HCT116 (cell line): ENCODE measurements at regions of chr19 and their contacts with region 1.

Region 1: DNA sequence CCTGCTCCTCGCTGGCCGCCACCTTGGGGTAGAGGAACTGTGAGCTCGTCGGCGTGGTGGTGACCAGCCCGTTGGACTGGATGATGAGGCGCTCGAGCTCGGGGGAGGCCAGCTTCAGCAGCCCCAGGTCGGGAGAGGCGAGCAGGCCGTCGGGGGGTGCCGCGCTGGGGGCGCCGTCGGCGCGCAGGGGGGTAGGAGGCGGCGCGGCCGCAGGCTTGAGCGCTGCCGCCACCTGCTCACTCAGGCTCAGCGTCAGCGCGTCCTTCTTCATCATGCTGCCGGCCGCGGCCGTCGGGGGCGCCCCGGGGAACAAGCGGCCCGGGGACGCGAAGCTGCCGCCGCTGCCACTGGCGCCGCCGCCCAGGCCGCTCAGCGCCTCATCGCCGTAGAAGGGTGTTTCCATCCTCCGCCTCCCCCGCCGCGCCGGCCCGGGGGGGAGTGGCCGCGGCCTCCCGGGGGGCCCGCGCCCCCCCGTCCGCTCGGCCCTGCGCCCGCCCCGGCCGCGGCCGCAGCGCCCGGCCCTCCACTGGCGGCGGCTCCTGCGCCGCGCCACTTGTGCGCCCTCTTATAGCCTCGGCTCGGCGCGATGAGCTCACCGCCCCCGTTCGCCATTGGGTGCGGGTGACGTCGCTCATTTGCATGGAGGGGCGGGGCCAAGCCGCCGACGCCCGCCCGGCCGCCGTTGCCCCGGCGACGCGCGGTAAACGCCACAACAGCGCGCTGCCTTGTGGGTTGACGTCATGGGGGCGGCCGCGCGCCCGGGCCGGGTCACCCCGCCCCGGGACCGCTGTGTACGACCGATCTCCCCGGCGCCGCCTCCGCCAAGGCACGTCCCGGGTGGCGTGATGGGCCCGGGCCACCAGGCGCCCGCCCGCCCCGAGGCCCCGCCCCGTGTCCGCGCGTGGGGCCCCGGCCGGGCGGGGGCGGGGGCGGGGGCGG is at the start of gene JUND:
- DNase-seq: peak; percentile 93
- ATAC-seq: peak; percentile 76
- H3K4me3 ChIP-seq: peak within 1 kb of the TSS; percentile 76 to 89
- H3K27ac ChIP-seq: peak within 1 kb of the TSS; percentile 100
- H3K4me1 ChIP-seq: peaks cover 43 to 56% of the 10 kb centered on the region in 2 experiments
- H3K27me3 ChIP-seq: no peaks in the 10 kb centered on the region
- CTCF ChIP-seq: no peak
- POLR2A ChIP-seq: peak; percentile 98
- RAD21 ChIP-seq: no peak
- total RNA-seq, gene JUND: 221 TPM

Region 2: DNA sequence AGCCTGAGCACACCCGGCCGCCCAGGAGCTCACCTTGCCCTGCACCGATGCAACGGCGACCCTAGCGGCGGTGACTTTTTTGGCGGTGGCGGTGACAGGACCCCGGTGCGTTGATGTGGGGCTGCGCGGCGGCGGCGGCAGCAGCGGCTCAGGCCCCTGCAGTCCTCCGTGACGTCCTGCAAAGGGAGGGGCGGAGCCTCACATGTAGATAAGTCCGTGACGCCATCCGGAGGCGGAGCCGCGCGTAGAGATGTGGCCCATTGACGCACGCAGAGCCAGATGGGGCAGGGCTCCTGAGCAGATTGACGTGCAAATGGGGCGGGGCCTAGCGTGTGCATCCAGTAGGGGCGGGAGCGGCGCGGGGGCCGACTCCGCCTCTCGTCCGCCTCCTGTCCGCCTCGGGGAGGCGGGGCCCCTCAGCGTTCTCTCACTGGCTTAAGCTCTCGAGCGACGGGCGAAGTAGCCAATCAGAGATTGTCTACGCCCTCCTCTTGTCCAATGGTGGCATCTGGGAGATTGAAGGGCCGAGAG is 77.4 kb before region 1 on chr19 and contains the start of gene RAB3A:
- CTCF ChIA-PET with region 1: interaction called, 9 read pairs
- POLR2A ChIA-PET with region 1: interaction called, 23 read pairs
- RAD21 ChIA-PET with region 1: interaction called in 1 of 2 experiments, 3 read pairs
- intact Hi-C with region 1: no loop called
- DNase-seq: peak; percentile 100
- ATAC-seq: peak; percentile 90
- H3K4me3 ChIP-seq: peak within 1 kb of the TSS; percentile 87 to 92
- H3K27ac ChIP-seq: peak within 1 kb of the TSS; percentile 90
- H3K4me1 ChIP-seq: peaks cover 13 to 32% of the 10 kb centered on the region in 2 experiments
- H3K27me3 ChIP-seq: no peaks in the 10 kb centered on the region
- CTCF ChIP-seq: no peak
- POLR2A ChIP-seq: no peak
- RAD21 ChIP-seq: no peak
- total RNA-seq, gene RAB3A: 10.6 TPM

Region 3: DNA sequence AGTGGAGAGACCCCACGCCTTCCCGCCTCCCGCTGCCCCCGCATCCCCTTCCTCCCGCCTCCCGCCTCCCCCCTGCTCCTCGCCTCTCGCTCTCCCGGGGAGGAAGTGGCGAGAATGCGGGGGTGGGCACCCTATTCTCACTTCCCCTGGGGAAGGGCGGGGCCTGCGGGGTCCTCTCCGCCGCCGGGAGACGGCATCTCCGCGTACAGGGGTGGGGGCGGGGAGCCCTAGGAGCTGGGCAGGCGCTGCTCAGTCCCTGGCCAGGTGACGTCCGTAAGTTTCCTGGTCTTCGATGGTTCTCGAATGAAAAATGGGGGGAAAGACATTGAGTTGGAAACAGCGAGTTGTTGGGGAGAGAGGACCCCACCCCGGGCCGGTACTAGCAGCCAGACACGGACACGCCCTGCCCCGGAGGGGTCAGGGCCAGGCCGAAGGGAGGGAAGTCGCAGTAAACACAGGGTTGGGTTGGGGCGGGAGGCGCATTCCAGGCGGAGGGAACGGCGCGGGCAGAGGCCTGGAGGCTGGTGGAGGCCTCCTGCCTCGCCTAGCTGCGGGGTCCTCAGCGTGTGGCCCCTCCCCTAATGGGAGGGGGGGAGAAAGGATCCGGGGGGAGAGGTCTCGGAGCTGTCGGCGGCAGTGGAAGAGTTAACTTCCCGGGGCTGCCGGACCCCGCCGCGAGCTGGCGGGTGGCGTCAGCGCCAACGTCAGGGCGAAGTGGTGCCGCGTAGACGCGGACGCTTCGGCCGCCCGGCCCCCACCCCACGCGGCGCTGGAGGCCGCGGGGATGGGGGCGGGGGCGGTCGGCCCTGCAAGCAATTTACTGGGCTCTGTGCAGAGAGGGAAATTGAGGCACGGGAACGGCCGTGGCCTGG is 10.5 kb after region 1 on chr19:
- CTCF ChIA-PET with region 1: interaction called, 28 read pairs
- POLR2A ChIA-PET with region 1: interaction called, 138 read pairs
- RAD21 ChIA-PET with region 1: interaction called, 5 to 6 read pairs
- intact Hi-C with region 1: no loop called
- DNase-seq: no peak
- ATAC-seq: peak; percentile 65
- H3K4me3 ChIP-seq: peak overlapping the region; percentile 49 to 74
- H3K27ac ChIP-seq: peak overlapping the region; percentile 94
- H3K4me1 ChIP-seq: peaks cover 28 to 55% of the 10 kb centered on the region in 2 experiments
- H3K27me3 ChIP-seq: no peaks in the 10 kb centered on the region
- CTCF ChIP-seq: no peak
- POLR2A ChIP-seq: peak; percentile 2
- RAD21 ChIP-seq: no peak

Region 4: GRCh38 chr19:18322759-18323460 is 41.6 kb after region 1 on chr19 and contains the start of gene LSM4:
- CTCF ChIA-PET with region 1: interaction called, 76 read pairs
- POLR2A ChIA-PET with region 1: interaction called, 52 read pairs
- RAD21 ChIA-PET with region 1: interaction called, 5 to 8 read pairs
- intact Hi-C with region 1: loop called (anchors 1 kb)
- DNase-seq: peak; percentile 98
- ATAC-seq: peak; percentile 93
- H3K4me3 ChIP-seq: peak within 1 kb of the TSS; percentile 78 to 97
- H3K27ac ChIP-seq: peak within 1 kb of the TSS; percentile 93
- H3K4me1 ChIP-seq: peaks cover 49 to 53% of the 10 kb centered on the region in 2 experiments
- H3K27me3 ChIP-seq: no peaks in the 10 kb centered on the region
- CTCF ChIP-seq: peak; percentile 29 to 51 (median 42)
- POLR2A ChIP-seq: peak; percentile 68
- RAD21 ChIP-seq: peak; percentile 69
- total RNA-seq, gene LSM4: 400 TPM

Region 5: GRCh38 chr19:18364826-18365528 is 83.6 kb after region 1 on chr19:
- CTCF ChIA-PET with region 1: interaction called, 3 read pairs
- POLR2A ChIA-PET with region 1: interaction called, 11 read pairs
- RAD21 ChIA-PET with region 1: no interaction called
- intact Hi-C with region 1: no loop called
- DNase-seq: peak; percentile 96
- ATAC-seq: peak; percentile 71
- H3K4me3 ChIP-seq: peak overlapping the region in 1 of 2 experiments; percentile 22; a peak in 2 of 4 replicates
- H3K27ac ChIP-seq: peak overlapping the region; percentile 99
- H3K4me1 ChIP-seq: peaks cover 51 to 66% of the 10 kb centered on the region in 2 experiments
- H3K27me3 ChIP-seq: no peaks in the 10 kb centered on the region
- CTCF ChIP-seq: no peak
- POLR2A ChIP-seq: no peak
- RAD21 ChIP-seq: no peak

Region 6: GRCh38 chr19:18408053-18408476 is 126.7 kb after region 1 on chr19:
- CTCF ChIA-PET with region 1: interaction called, 3 read pairs
- POLR2A ChIA-PET with region 1: interaction called, 3 read pairs
- RAD21 ChIA-PET with region 1: interaction called in 1 of 2 experiments, 3 read pairs
- intact Hi-C with region 1: loop called (anchors 1 kb)
- DNase-seq: no peak
- ATAC-seq: peak; percentile 51
- H3K4me3 ChIP-seq: no peak overlapping the region
- H3K27ac ChIP-seq: peak overlapping the region; percentile 4; the same call in 1 of the 2 replicates
- H3K4me1 ChIP-seq: peaks cover 9 to 30% of the 10 kb centered on the region in 2 experiments; a peak in 3 of 4 replicates
- H3K27me3 ChIP-seq: no peaks in the 10 kb centered on the region
- CTCF ChIP-seq: peak; percentile 69 to 84 (median 73)
- POLR2A ChIP-seq: no peak
- RAD21 ChIP-seq: peak; percentile 75

Region 7: DNA sequence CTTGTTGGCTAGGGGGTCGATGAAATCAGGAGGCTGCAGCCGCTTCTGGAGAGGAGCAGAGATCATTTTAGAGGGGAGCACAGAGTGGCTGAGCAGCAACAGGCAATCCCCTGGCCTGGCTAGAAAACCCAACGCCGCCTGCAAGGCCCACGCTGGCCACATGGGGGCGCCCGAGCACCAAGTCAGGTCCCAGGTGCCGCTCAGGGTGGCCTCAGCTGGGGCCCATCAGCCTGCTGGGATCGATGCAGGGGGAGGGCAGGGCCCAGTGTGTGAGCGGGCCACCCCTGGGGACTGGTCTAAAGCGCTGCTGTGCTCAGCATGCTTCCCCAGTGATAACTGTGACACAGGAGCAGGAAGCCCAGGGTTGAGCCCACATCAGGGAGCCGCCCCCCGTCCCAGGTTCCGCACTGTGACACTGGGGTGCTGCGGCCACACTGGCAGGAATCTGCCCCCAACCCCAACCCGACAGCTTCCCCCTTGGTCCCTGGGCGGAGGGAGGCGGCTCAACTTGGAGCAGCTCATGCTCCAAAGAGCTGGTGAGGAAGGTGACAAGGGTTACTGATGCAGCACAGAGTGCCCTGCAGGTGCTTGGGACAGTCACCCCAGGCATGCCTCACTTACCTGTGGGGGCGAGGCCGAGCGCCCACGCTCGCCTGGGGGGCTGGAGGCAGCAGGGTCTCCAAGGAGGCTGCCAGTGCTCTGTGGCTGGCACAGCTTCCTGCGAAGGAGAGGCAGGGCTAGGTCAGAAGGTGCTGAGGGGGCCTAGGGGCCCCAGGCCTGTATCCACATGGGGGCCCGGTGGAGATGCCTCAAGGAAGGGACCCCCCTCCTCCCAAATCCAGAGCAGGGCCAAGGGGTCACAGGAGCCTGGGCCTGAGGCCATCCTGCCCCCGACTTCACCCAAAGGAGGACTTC is 169.8 kb after region 1 on chr19:
- CTCF ChIA-PET with region 1: no interaction called
- POLR2A ChIA-PET with region 1: no interaction called
- RAD21 ChIA-PET with region 1: no interaction called
- intact Hi-C with region 1: no loop called
- DNase-seq: no peak
- ATAC-seq: peak; percentile 91
- H3K4me3 ChIP-seq: no peak overlapping the region
- H3K27ac ChIP-seq: no peak overlapping the region; the same call in 1 of the 2 replicates
- H3K4me1 ChIP-seq: peaks cover 3 to 8% of the 10 kb centered on the region in 2 experiments; a peak in 3 of 4 replicates
- H3K27me3 ChIP-seq: no peaks in the 10 kb centered on the region
- CTCF ChIP-seq: peak; percentile 74 to 97 (median 96)
- POLR2A ChIP-seq: no peak
- RAD21 ChIP-seq: peak; percentile 88